ENCODE measurements at regions of chr9 and their contacts with region 1.

Region 1: DNA sequence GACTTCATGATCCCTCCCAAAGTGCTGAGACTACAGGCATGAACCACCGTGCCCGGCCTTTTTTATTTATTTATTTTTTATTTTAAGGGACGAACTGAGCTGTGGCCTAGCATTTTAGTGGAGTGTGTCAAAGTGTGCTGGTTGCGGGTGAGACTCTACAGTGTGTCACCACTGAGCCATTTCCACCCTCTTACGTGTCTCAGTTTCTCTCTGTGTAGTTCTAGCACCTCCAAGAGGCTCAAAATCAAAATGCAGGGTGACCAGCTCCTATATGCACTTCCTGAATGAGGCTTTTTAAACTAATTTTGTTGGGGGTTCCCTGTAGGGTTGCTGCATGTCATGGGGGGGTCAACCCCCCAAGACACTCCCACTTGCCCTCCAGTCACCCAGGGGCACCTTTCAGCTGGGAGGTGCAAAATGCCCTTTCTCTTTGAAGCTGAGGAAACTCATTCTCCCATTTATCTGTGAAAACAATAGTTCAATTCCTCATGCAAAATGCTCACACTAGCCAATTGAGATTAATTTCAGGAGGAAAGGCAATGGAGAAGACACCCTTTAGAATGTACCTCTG is 69.3 kb downstream of the COL15A1 start:
- DNase-seq: peak; percentile 42 to 76 (median 52)
- ATAC-seq: peak; percentile 96
- H3K4me3 ChIP-seq: no peak overlapping the region
- H3K27ac ChIP-seq: peak overlapping the region; percentile 37; the same call in 2 of the 3 replicates
- H3K4me1 ChIP-seq: peaks cover 0 to 29% of the 10 kb centered on the region in 2 experiments; a peak in 4 of 5 replicates
- H3K27me3 ChIP-seq: no peaks in the 10 kb centered on the region
- CTCF ChIP-seq: peak; percentile 69 to 76 (median 71)
- EP300 ChIP-seq: no peak
- POLR2A ChIP-seq: no peak
- RAD21 ChIP-seq: peak; percentile 80 to 88

Region 2: DNA sequence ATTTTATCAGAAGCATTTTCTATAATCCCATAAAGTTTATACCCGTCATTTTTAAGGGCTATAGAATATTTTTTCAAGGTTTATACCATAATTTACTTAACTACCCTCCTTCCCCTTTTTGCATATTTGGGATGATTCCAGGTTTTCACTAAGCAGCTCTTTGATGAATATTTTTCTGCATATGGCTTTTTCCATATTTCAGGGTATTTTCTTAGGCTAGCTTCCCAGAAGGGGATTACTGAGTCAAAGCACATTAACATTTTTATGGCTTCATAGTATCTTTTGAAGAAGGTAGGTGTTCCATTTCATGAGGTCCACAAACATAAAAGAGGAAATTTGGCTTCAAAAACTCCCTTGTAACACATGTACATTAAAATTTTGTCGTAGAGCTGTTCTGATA is 84.0 kb before region 1 on chr9:
- CTCF ChIA-PET with region 1: no interaction called
- POLR2A ChIA-PET with region 1: no interaction called
- in situ Hi-C with region 1: no loop called
- intact Hi-C with region 1: no loop called
- DNase-seq: no peak
- ATAC-seq: no peak
- H3K4me3 ChIP-seq: no peak overlapping the region
- H3K27ac ChIP-seq: no peak overlapping the region
- H3K4me1 ChIP-seq: peaks cover 41 to 48% of the 10 kb centered on the region in 2 experiments
- H3K27me3 ChIP-seq: no peaks in the 10 kb centered on the region
- CTCF ChIP-seq: no peak
- EP300 ChIP-seq: no peak
- POLR2A ChIP-seq: no peak
- RAD21 ChIP-seq: no peak

Region 3: GRCh38 chr9:99026338-99027298 is 13.6 kb after region 1 on chr9:
- CTCF ChIA-PET with region 1: no interaction called
- POLR2A ChIA-PET with region 1: interaction called, 13 read pairs
- in situ Hi-C with region 1: no loop called
- intact Hi-C with region 1: no loop called
- DNase-seq: peak in 2 of 4 experiments; percentile 40 to 54
- ATAC-seq: peak; percentile 67
- H3K4me3 ChIP-seq: no peak overlapping the region
- H3K27ac ChIP-seq: no peak overlapping the region
- H3K4me1 ChIP-seq: peaks cover 16 to 32% of the 10 kb centered on the region in 2 experiments
- H3K27me3 ChIP-seq: no peaks in the 10 kb centered on the region
- CTCF ChIP-seq: peak; percentile 11 to 41 (median 15); a peak in 2 of 6 replicates
- EP300 ChIP-seq: no peak
- POLR2A ChIP-seq: no peak
- RAD21 ChIP-seq: no peak

Region 4: DNA sequence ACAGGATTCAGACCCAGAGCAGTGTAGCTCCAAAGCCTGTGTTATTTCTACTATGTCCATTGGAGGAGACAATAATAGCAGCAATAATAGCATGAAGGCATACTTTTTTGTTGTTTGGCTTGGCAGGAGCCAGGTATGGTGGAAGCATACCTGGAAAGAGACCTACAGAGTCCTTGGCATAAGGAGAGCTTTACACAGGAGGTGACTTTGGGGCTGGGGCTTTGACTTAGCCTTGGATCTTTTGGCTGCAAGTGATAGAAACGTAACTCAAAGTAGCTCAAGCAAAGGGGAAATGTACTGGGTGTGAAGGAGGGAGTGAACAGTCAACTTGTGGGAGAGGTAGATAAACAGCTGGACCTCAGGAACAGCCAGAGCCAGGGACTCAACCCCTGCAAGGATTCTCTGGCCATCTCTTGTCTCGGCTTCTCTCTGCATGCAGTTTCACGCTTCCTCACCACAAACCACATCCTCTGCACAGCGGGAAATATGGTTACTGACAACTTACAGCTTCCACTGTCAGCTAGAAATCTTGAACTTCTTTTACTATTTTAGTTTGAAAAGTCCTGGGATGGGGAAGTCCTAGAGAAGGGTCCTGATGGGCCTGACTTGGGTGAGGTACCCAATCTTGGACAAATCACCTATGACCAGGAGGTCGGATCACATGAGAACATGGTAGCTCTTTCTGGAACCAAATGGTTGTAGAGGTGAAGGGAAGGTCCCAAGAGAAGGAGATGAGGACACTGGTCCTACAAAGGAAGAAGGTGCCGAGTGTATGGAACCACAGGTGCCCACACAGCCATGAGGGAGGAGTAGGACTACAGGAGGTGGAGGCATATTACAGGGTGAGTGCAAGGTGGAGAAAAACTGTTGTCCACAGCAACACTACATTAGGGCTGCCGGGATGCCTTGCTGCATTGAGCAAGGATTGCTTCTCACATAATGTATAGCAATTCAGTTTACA is 44.9 kb after region 1 on chr9:
- CTCF ChIA-PET with region 1: no interaction called
- POLR2A ChIA-PET with region 1: interaction called, 3 read pairs
- in situ Hi-C with region 1: no loop called
- intact Hi-C with region 1: loop called (anchors 1 kb)
- DNase-seq: peak; percentile 61 to 94 (median 78)
- ATAC-seq: peak; percentile 89
- H3K4me3 ChIP-seq: 0 out of 2 replicates have a peak overlapping the region, but pooled peaks have one; percentile 4
- H3K27ac ChIP-seq: peak overlapping the region; percentile 83
- H3K4me1 ChIP-seq: peaks cover 13 to 50% of the 10 kb centered on the region in 2 experiments
- H3K27me3 ChIP-seq: no peaks in the 10 kb centered on the region
- CTCF ChIP-seq: no peak
- EP300 ChIP-seq: peak; percentile 87
- POLR2A ChIP-seq: no peak
- RAD21 ChIP-seq: peak in 1 of 2 experiments; percentile 32; a peak in 2 of 4 replicates

Measured in K562 (cell line).